ENCODE measurements at regions of chr17 and their contacts with region 1.

Region 1: GRCh38 chr17:51153210-51154072 is at the start of gene NME1:
- DNase-seq: peak; percentile 100
- ATAC-seq: peak; percentile 93
- H3K4me3 ChIP-seq: peak within 1 kb of the TSS; percentile 58
- H3K27ac ChIP-seq: peak within 1 kb of the TSS; percentile 51
- H3K4me1 ChIP-seq: no peaks in the 10 kb centered on the region
- H3K27me3 ChIP-seq: no peaks in the 10 kb centered on the region
- CTCF ChIP-seq: peak; percentile 97
- POLR2A ChIP-seq: peak; percentile 79
- RAD21 ChIP-seq: peak; percentile 93
- total RNA-seq, gene NME1: 261 and 312 TPM in 2 replicates

Region 2: DNA sequence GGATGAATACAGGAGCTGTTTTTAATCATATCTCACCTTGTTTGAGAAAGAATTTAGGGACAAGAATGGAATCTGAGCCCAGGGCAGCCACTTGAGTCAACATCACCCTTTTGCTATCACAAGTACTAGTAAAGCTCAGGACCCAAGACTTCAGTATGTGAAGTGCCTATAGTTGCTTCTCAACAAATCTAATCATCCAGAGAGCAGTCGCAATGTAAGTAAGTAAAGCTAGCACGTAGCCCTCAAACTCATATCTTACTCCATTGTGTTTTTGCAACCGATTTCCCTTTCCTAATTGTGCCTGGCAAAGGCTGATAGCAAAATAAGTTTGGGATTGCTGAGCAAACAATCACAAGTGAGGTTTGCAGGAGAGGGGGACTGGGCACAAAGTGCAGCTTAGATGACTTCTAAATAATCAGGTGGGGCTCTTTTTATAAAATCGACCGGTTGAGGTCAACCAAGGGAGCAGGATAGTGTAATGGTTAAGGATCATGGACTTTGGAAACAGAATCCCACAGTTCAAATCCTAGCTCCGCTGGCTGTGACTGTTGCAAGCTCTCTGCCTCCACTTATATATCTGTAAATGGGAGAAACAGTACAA is 300.3 kb before region 1 on chr17:
- CTCF ChIA-PET with region 1: interaction called, 3 read pairs
- POLR2A ChIA-PET with region 1: no interaction called
- dilution Hi-C with region 1: no loop called
- in situ Hi-C with region 1: no loop called
- intact Hi-C with region 1: loop called (anchors 2 kb)
- DNase-seq: no peak
- ATAC-seq: no peak
- H3K4me3 ChIP-seq: no peak overlapping the region
- H3K27ac ChIP-seq: no peak overlapping the region
- H3K4me1 ChIP-seq: 0 out of 2 replicates have a peak, but pooled peaks cover 2% of the 10 kb centered on the region
- H3K27me3 ChIP-seq: no peaks in the 10 kb centered on the region; the same call in 1 of the 2 replicates
- CTCF ChIP-seq: no peak
- POLR2A ChIP-seq: no peak
- RAD21 ChIP-seq: no peak

Region 3: DNA sequence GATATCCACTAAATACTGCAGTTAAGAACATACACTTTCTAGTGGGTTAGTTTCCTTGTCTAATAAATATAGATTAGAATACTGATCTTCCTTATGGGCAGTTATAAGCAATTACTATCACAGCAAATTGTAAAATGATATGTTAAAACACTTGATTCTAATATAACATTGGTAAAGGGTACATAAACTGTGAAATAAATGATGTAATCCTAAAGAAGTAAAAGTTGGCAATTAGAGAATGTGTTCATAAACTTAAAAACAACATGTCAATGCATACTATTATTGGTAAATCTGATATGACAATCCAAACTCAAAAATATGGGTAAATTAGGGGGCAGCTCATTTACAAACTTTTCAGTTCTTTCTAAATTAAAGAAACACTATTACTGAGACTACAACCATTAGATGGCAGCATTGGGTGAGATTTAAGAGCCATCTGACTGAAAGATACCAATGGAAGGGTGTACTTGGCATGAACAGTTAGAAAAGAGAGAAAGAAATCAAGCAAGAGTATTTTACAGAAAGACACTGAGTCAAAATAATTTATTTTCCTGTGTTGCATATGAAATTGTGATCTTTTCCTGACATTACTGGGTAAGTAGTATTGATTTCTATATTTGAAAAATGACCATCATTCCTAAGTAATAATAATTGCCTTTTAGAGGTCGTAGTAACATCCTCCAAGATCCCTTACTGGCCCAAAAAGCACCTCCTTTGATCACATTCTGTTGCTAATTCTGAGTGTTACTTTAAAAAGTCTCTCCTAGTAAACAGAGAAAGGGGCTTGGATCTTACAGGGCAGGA is 152.4 kb before region 1 on chr17:
- CTCF ChIA-PET with region 1: interaction called, 12 read pairs
- POLR2A ChIA-PET with region 1: no interaction called
- dilution Hi-C with region 1: no loop called
- in situ Hi-C with region 1: loop called (anchors 5 kb)
- intact Hi-C with region 1: loop called (anchors 1 kb)
- DNase-seq: peak; percentile 78
- ATAC-seq: peak; percentile 59
- H3K4me3 ChIP-seq: no peak overlapping the region
- H3K27ac ChIP-seq: no peak overlapping the region
- H3K4me1 ChIP-seq: no peaks in the 10 kb centered on the region
- H3K27me3 ChIP-seq: no peaks in the 10 kb centered on the region
- CTCF ChIP-seq: peak; percentile 63
- POLR2A ChIP-seq: no peak
- RAD21 ChIP-seq: peak; percentile 76

Region 4: GRCh38 chr17:51056813-51057510 is 96.5 kb before region 1 on chr17:
- CTCF ChIA-PET with region 1: interaction called, 3 read pairs
- POLR2A ChIA-PET with region 1: no interaction called
- dilution Hi-C with region 1: no loop called
- in situ Hi-C with region 1: no loop called
- intact Hi-C with region 1: loop called (anchors 2 kb)
- DNase-seq: peak; percentile 93
- ATAC-seq: peak; percentile 90
- H3K4me3 ChIP-seq: no peak overlapping the region
- H3K27ac ChIP-seq: peak overlapping the region; percentile 7; the same call in 1 of the 2 replicates
- H3K4me1 ChIP-seq: peaks cover 10% of the 10 kb centered on the region
- H3K27me3 ChIP-seq: no peaks in the 10 kb centered on the region
- CTCF ChIP-seq: peak; percentile 74
- POLR2A ChIP-seq: peak; percentile 55; the same call in 1 of the 2 replicates
- RAD21 ChIP-seq: peak; percentile 70

Region 5: DNA sequence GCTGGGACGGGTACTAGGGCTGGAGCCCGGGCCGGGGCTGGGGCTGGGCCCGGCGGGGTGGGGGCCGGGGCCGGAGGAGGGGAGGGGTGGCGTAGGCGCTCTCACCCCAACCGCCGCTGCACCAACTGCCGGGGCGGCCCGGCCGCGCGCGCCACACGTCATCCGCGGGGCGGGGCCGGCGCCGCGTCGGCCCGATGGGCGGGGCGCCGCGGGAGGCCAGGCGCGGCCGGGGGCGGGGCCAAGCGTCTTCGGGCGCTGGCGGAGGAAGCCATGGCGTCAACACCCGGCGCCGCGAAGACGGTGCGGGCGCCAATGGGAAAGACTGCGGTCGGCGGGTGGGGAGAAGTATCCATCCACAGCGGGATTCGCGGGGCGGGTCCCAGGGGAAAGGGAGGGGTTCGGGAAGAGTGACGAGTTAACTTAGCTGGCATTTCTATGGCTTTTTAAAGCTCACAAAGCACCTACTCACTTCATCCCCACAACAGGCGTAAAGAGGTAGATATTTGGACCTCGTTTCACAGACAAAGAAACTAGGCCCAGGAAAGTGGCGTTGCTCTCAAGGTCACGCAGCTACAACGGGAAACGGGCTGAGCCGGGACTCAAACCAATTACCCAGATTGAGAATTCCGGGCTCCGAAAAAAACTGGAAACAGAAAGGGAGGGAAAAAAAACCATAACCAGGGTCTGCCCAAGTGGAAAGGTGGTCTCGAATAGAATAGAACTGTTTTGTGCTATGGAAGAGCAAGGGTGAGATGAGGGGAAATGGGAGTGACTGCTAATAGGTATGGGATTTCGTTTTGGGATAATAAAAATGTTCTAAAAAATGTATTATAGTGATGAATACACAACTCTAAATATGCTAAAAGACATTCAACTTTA is 32.5 kb before region 1 on chr17 and contains the start of gene SPAG9:
- CTCF ChIA-PET with region 1: interaction called, 5 read pairs
- POLR2A ChIA-PET with region 1: no interaction called
- dilution Hi-C with region 1: no loop called
- in situ Hi-C with region 1: no loop called
- intact Hi-C with region 1: loop called (anchors 1 kb)
- DNase-seq: peak; percentile 94
- ATAC-seq: peak; percentile 91
- H3K4me3 ChIP-seq: peak within 1 kb of the TSS; percentile 90
- H3K27ac ChIP-seq: peak within 1 kb of the TSS; percentile 93
- H3K4me1 ChIP-seq: peaks cover 6% of the 10 kb centered on the region
- H3K27me3 ChIP-seq: no peaks in the 10 kb centered on the region
- CTCF ChIP-seq: no peak
- POLR2A ChIP-seq: peak; percentile 96
- RAD21 ChIP-seq: no peak
- total RNA-seq, gene SPAG9: 75.5 and 93.9 TPM in 2 replicates

Region 6: GRCh38 chr17:51200295-51200694 is 46.9 kb after region 1 on chr17:
- CTCF ChIA-PET with region 1: no interaction called
- POLR2A ChIA-PET with region 1: no interaction called
- dilution Hi-C with region 1: no loop called
- in situ Hi-C with region 1: no loop called
- intact Hi-C with region 1: no loop called
- DNase-seq: no peak
- ATAC-seq: no peak
- H3K4me3 ChIP-seq: no peak overlapping the region
- H3K27ac ChIP-seq: no peak overlapping the region
- H3K4me1 ChIP-seq: no peaks in the 10 kb centered on the region
- H3K27me3 ChIP-seq: no peaks in the 10 kb centered on the region
- CTCF ChIP-seq: no peak
- POLR2A ChIP-seq: no peak
- RAD21 ChIP-seq: no peak

Measured in IMR-90 (cell line).